ENCODE measurements at regions of chr21 and their contacts with region 1.

Region 1: GRCh38 chr21:33461538-33462250 is 18.1 kb downstream of the TMEM50B start:
- DNase-seq: no peak
- H3K4me3 ChIP-seq: no peak overlapping the region
- H3K4me3 Mint-ChIP-seq: no peak overlapping the region
- H3K27ac ChIP-seq: no peak overlapping the region
- H3K27ac Mint-ChIP-seq: no peak overlapping the region
- H3K4me1 ChIP-seq: no peaks in the 10 kb centered on the region
- H3K4me1 Mint-ChIP-seq: peaks cover 0 to 2% (median 0%) of the 10 kb centered on the region in 4 donors
- H3K27me3 ChIP-seq: no peaks in the 10 kb centered on the region
- H3K27me3 Mint-ChIP-seq: no peaks in the 10 kb centered on the region

Region 2: GRCh38 chr21:33339918-33340317 is 121.8 kb before region 1 on chr21:
- CTCF ChIA-PET with region 1: no interaction called
- POLR2A ChIA-PET with region 1: no interaction called
- intact Hi-C with region 1: loop called (anchors 2 kb)
- DNase-seq: no peak
- H3K4me3 ChIP-seq: no peak overlapping the region
- H3K4me3 Mint-ChIP-seq: no peak overlapping the region
- H3K27ac ChIP-seq: no peak overlapping the region
- H3K27ac Mint-ChIP-seq: peak overlapping the region in 4 of 7 donors; percentile 45 to 81 (median 67)
- H3K4me1 ChIP-seq: no peaks in the 10 kb centered on the region
- H3K4me1 Mint-ChIP-seq: peaks cover 9 to 16% (median 13%) of the 10 kb centered on the region in 4 donors
- H3K27me3 ChIP-seq: no peaks in the 10 kb centered on the region
- H3K27me3 Mint-ChIP-seq: no peaks in the 10 kb centered on the region

Region 3: DNA sequence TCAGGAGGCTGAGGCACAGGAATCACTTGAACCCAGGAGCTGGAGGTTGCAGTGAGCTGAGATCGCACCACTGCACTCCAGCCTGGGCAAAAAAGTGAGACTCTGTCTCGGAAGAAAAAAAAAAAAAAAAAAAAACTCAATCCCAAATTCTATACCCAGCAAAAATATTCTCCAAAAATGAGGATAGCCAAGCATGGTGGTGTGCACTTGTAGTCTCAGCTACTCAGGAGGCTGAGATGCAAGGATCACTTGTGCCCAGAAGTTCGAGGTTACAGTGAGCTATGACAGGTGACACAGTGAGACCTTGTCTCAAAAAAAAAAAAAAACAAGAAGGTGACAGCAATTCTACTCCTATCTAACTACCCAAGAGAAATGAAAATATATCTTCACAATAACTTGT is 11.7 kb after region 1 on chr21:
- CTCF ChIA-PET with region 1: no interaction called
- POLR2A ChIA-PET with region 1: no interaction called
- intact Hi-C with region 1: no loop called
- DNase-seq: no peak
- H3K4me3 ChIP-seq: no peak overlapping the region
- H3K4me3 Mint-ChIP-seq: peak overlapping the region in 1 of 8 donors; percentile 25
- H3K27ac ChIP-seq: no peak overlapping the region
- H3K27ac Mint-ChIP-seq: no peak overlapping the region
- H3K4me1 ChIP-seq: peaks cover 4% of the 10 kb centered on the region
- H3K4me1 Mint-ChIP-seq: peaks cover 8 to 31% (median 13%) of the 10 kb centered on the region in 4 donors
- H3K27me3 ChIP-seq: no peaks in the 10 kb centered on the region
- H3K27me3 Mint-ChIP-seq: no peaks in the 10 kb centered on the region

Region 4: DNA sequence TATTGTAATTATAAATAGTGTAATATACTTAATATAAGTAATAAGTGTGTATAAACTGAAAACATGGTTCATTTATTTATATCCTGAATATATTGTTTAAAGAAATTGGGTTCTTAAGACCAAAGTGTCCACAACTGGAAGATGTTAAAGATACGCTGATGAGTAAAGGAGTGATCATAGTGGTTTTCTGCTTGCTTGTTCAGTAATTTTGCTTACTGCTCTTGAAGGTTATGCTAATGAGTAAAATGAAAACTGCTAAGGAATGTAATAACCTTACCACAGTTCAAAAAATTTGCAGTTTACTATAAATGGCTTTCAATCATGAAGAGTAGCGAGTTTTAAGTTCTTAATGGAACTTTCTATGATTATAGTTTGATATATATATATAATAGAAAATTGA is 104.8 kb after region 1 on chr21:
- CTCF ChIA-PET with region 1: no interaction called
- POLR2A ChIA-PET with region 1: no interaction called
- intact Hi-C with region 1: no loop called
- DNase-seq: no peak
- H3K4me3 ChIP-seq: no peak overlapping the region
- H3K4me3 Mint-ChIP-seq: no peak overlapping the region
- H3K27ac ChIP-seq: no peak overlapping the region
- H3K27ac Mint-ChIP-seq: peak overlapping the region in 1 of 7 donors; percentile 27
- H3K4me1 ChIP-seq: peaks cover 36% of the 10 kb centered on the region
- H3K4me1 Mint-ChIP-seq: peaks cover 21 to 55% (median 31%) of the 10 kb centered on the region in 4 donors
- H3K27me3 ChIP-seq: no peaks in the 10 kb centered on the region
- H3K27me3 Mint-ChIP-seq: no peaks in the 10 kb centered on the region